CD4-positive, alpha-beta memory T cell (primary cell): ENCODE measurements at regions of chr14 and their contacts with region 1.

Region 1: DNA sequence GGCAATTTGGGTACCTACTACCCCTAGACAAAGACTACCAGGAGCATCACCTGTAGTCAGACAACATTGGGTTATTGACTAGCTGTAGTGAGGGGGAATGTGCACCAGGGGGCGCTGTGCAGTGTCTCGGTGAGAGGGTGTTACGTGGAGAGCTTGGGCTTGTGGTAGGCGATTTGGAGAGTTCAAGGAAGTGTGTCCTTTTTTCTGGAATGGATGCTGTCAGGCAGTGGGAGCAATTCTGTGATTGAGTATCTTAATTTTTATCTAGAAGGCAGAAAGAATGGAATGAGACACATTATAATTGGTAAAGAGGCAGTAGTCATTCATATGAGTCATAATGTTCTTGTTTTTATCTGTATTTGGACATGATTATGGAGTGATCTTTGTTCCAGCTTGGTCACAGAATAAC is 187.7 kb downstream of the GALC start:
- DNase-seq: peak; percentile 6 to 33 (median 14)
- H3K4me3 ChIP-seq: no peak overlapping the region
- H3K4me3 Mint-ChIP-seq: no peak overlapping the region
- H3K27ac ChIP-seq: no peak overlapping the region
- H3K27ac Mint-ChIP-seq: no peak overlapping the region
- H3K4me1 ChIP-seq: no peaks in the 10 kb centered on the region
- H3K4me1 Mint-ChIP-seq: peaks cover 0 to 3% (median 0%) of the 10 kb centered on the region in 4 donors
- H3K27me3 ChIP-seq: no peaks in the 10 kb centered on the region
- H3K27me3 Mint-ChIP-seq: peaks cover 0 to 4% of the 10 kb centered on the region in 2 donors

Region 2: DNA sequence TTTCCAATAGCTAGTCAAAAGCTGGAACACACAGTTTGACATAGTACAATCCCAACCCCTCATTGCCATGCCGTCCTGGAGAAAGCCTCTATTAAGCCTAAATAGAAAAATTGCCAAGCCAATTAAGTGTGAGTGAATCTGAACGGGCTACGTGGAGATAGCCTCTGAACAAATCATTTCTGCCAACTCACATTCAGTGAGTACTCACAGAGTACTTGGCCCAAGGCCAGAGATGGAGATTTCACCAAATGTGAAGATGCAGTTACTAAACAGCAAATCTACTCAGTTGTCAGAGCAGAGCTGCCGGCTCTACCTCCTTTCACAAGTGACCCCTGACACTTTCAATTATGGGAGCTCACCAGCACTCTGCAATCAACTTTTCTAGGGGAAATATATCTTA is 162.3 kb before region 1 on chr14:
- CTCF ChIA-PET with region 1: no interaction called
- POLR2A ChIA-PET with region 1: no interaction called
- intact Hi-C with region 1: no loop called
- DNase-seq: no peak
- H3K4me3 ChIP-seq: no peak overlapping the region
- H3K4me3 Mint-ChIP-seq: no peak overlapping the region
- H3K27ac ChIP-seq: no peak overlapping the region
- H3K27ac Mint-ChIP-seq: no peak overlapping the region
- H3K4me1 ChIP-seq: no peaks in the 10 kb centered on the region
- H3K4me1 Mint-ChIP-seq: no peaks in the 10 kb centered on the region
- H3K27me3 ChIP-seq: no peaks in the 10 kb centered on the region
- H3K27me3 Mint-ChIP-seq: no peaks in the 10 kb centered on the region

Region 3: DNA sequence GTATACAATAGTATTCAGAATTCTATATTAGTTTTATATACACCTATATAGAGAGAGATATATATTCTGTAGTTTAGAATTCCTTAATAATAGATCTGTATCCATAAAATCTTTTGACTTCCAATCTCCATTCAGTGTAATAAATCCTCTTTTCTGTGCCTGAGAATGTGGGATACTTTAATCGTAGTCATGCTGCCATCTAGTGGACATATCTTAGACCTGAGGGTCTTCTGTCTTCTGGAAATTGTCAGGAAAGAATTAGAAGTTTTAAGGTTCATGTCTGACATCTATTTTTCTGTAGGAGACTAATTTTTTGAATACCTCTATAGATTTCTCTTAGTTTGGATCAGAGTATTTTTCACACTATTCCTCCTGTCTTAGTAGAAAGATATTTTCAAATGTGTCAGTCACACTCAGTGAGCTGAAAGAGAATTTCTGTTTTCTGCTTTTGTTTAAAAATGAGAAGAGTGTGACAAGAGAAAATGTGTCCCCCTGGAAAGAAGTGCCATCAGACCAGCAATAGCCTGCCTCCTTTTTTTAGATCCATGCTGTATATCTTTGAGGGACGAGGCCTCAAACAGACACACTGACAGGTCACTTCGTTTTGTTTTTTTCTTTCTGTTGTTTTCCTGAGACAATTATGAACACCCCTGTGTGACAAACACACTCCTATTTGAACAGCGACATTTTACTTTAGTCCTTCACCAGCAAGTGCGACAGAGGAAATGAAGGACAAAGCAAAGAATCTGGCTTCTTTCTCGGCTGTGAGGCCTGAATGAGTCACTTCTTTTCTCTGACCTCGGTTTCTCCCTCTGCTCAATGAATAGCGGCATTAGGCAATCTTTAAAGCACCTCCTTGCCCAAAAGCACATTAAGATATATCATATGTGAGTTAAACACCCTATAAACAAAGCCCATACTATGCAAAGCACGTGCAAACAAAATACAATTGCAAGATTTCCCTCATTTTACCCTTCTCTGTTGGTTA is 91.4 kb after region 1 on chr14:
- CTCF ChIA-PET with region 1: interaction called, 12 read pairs
- POLR2A ChIA-PET with region 1: no interaction called
- intact Hi-C with region 1: loop called (anchors 1 kb)
- DNase-seq: peak in 4 of 5 donors; percentile 5 to 17 (median 6)
- H3K4me3 ChIP-seq: no peak overlapping the region
- H3K4me3 Mint-ChIP-seq: no peak overlapping the region
- H3K27ac ChIP-seq: no peak overlapping the region
- H3K27ac Mint-ChIP-seq: no peak overlapping the region
- H3K4me1 ChIP-seq: no peaks in the 10 kb centered on the region
- H3K4me1 Mint-ChIP-seq: no peaks in the 10 kb centered on the region
- H3K27me3 ChIP-seq: peaks cover 5% of the 10 kb centered on the region
- H3K27me3 Mint-ChIP-seq: peaks cover 0 to 14% of the 10 kb centered on the region in 2 donors

Region 4: DNA sequence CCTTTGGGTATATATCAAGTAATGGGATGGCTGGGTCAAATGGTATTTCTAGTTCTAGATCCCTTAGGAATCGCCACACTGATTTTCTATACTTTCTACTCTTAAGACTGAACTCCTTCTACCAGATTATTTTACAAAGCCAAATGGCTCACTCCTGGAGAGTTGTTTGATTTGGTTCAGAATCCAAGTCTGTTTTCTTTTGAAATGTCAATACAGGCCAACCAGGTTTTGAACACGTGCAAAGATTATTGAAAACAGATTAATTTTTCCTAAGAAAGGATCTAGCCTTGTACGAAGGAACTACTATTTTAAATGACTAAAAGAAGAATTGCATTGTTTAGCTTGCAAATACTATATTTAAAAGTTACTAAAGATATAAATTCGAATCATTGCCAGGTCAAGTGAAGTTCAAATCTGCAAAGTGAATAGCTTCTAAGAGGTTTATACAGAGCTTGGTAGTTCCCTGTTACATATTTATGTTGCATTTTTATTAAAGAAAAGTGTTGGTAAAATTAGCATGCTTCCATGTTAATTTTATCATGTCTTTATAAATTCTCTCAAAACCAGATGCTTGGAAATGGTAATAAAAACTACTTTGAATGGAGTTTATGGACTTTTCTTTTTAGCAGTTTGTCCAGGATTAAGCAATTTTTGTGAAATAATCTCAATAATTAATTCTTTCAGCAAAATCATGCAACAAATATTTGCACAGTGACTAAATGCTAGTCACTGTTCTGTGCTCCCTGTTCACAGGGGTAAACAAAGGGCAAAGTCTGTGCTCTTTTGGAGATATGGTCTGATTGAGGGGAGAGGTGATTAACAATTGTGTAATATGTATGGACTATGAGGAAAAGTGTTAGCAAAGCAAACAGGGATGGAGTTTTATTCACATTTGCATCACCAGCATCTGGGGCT is 238.5 kb after region 1 on chr14:
- CTCF ChIA-PET with region 1: no interaction called
- POLR2A ChIA-PET with region 1: no interaction called
- intact Hi-C with region 1: no loop called
- DNase-seq: no peak
- H3K4me3 ChIP-seq: no peak overlapping the region
- H3K4me3 Mint-ChIP-seq: no peak overlapping the region
- H3K27ac ChIP-seq: no peak overlapping the region
- H3K27ac Mint-ChIP-seq: peak overlapping the region in 1 of 7 donors; percentile 15
- H3K4me1 ChIP-seq: peaks cover 2% of the 10 kb centered on the region
- H3K4me1 Mint-ChIP-seq: peaks cover 3 to 13% (median 6%) of the 10 kb centered on the region in 4 donors
- H3K27me3 ChIP-seq: no peaks in the 10 kb centered on the region
- H3K27me3 Mint-ChIP-seq: no peaks in the 10 kb centered on the region

Region 5: GRCh38 chr14:88129306-88130056 is 324.2 kb after region 1 on chr14:
- CTCF ChIA-PET with region 1: no interaction called
- POLR2A ChIA-PET with region 1: no interaction called
- intact Hi-C with region 1: loop called (anchors 2 kb)
- DNase-seq: no peak
- H3K4me3 ChIP-seq: no peak overlapping the region
- H3K4me3 Mint-ChIP-seq: peak overlapping the region in 7 of 8 donors; percentile 5 to 72 (median 55)
- H3K27ac ChIP-seq: no peak overlapping the region
- H3K27ac Mint-ChIP-seq: peak overlapping the region in 6 of 7 donors; percentile 60 to 85 (median 76)
- H3K4me1 ChIP-seq: peaks cover 32% of the 10 kb centered on the region
- H3K4me1 Mint-ChIP-seq: peaks cover 17 to 36% (median 24%) of the 10 kb centered on the region in 4 donors
- H3K27me3 ChIP-seq: no peaks in the 10 kb centered on the region
- H3K27me3 Mint-ChIP-seq: peaks cover 4 to 11% of the 10 kb centered on the region in 2 donors